Adrenal gland (tissue), 19 donors: ENCODE measurements at regions of chr18 and their contacts with region 1.

Region 1: GRCh38 chr18:58180738-58181353 is 136.8 kb downstream of the NEDD4L start:
- DNase-seq: peak; percentile 28 to 86 (median 60)
- H3K4me3 ChIP-seq: no peak overlapping the region
- H3K27ac ChIP-seq: no peak overlapping the region
- H3K4me1 ChIP-seq: peaks cover 4 to 26% of the 10 kb centered on the region in 2 donors
- H3K27me3 ChIP-seq: no peaks in the 10 kb centered on the region
- CTCF ChIP-seq: peak; percentile 72 to 91 (median 84)
- POLR2A ChIP-seq: no peak

Region 2: GRCh38 chr18:58140387-58141325 is 40.2 kb before region 1 on chr18:
- intact Hi-C with region 1: loop called (anchors 5 kb)
- DNase-seq: peak; percentile 60 to 81 (median 69)
- H3K4me3 ChIP-seq: no peak overlapping the region
- H3K27ac ChIP-seq: peak overlapping the region in 3 of 5 donors; percentile 7 to 74 (median 24)
- H3K4me1 ChIP-seq: peaks cover 0 to 14% of the 10 kb centered on the region in 2 donors
- H3K27me3 ChIP-seq: no peaks in the 10 kb centered on the region
- CTCF ChIP-seq: peak; percentile 13 to 56 (median 40)
- POLR2A ChIP-seq: no peak